ENCODE measurements at regions of chr19 and their contacts with region 1.

Region 1: DNA sequence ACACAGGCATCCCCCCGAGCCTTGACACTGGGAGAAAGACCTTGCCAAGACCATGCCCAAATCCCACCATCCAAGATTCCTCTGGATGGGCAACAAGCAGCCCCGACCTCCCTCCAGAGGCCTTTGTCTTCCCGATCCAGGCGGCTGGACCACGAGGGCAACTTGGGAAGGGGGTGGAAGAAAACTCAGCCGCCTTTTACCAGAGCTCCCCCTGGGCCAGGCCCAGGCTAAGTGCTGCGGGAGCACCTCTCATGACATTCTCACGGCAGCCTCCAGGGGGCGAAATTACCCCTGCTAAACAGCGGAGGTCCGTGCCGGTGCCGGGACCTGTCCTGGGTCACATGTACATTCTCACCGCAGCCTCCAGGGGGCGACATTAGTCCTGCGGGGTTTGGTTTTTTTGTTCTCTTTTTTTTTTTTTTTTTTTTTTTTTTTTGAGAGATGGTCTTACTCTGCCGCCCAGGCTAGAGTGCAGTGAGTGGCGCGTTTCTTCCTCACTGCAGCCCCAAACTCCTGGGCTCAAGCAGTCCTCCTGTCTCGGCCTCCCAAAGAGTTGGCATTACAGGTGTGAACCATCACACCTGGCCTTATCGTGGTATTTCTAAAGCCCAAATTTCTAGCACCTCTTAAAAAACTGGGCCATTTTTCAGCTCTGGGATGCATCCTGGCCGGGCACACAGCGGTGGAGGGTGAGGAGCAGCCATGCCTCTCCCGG is 2.1 kb upstream of the RSPH6A start:
- DNase-seq: peak; percentile 93 to 99 (median 95)
- ATAC-seq: peak; percentile 100
- H3K4me3 ChIP-seq: no peak overlapping the region
- H3K4me3 Mint-ChIP-seq: peak overlapping the region; percentile 18
- H3K27ac ChIP-seq: no peak overlapping the region
- H3K27ac Mint-ChIP-seq: no peak overlapping the region
- H3K4me1 ChIP-seq: peaks cover 16% of the 10 kb centered on the region
- H3K4me1 Mint-ChIP-seq: peaks cover 7% of the 10 kb centered on the region
- H3K27me3 ChIP-seq: peaks cover 0 to 5% of the 10 kb centered on the region in 2 experiments
- H3K27me3 Mint-ChIP-seq: peaks cover 8% of the 10 kb centered on the region
- CTCF ChIP-seq: peak; percentile 99

Region 2: GRCh38 chr19:45584332-45585157 is 232.6 kb before region 1 on chr19 and contains the start of gene OPA3:
- CTCF ChIA-PET with region 1: no interaction called
- POLR2A ChIA-PET with region 1: no interaction called
- intact Hi-C with region 1: no loop called
- DNase-seq: peak; percentile 97 to 100 (median 99)
- ATAC-seq: peak; percentile 86
- H3K4me3 ChIP-seq: peak within 1 kb of the TSS; percentile 80 to 86
- H3K4me3 Mint-ChIP-seq: peak within 1 kb of the TSS; percentile 96
- H3K27ac ChIP-seq: peak within 1 kb of the TSS; percentile 95 to 99
- H3K27ac Mint-ChIP-seq: peak within 1 kb of the TSS; percentile 99
- H3K4me1 ChIP-seq: peaks cover 6% of the 10 kb centered on the region
- H3K4me1 Mint-ChIP-seq: peaks cover 19% of the 10 kb centered on the region
- H3K27me3 ChIP-seq: no peaks in the 10 kb centered on the region
- H3K27me3 Mint-ChIP-seq: peaks cover 7% of the 10 kb centered on the region
- CTCF ChIP-seq: no peak
- total RNA-seq, gene OPA3: 5.6 to 5.7 TPM

Region 3: GRCh38 chr19:45632468-45633196 is 184.5 kb before region 1 on chr19:
- CTCF ChIA-PET with region 1: no interaction called
- POLR2A ChIA-PET with region 1: no interaction called
- intact Hi-C with region 1: no loop called
- DNase-seq: peak in 4 of 9 experiments; percentile 24 to 54 (median 41)
- ATAC-seq: no peak
- H3K4me3 ChIP-seq: no peak overlapping the region
- H3K4me3 Mint-ChIP-seq: no peak overlapping the region
- H3K27ac ChIP-seq: no peak overlapping the region
- H3K27ac Mint-ChIP-seq: no peak overlapping the region
- H3K4me1 ChIP-seq: no peaks in the 10 kb centered on the region
- H3K4me1 Mint-ChIP-seq: peaks cover 2% of the 10 kb centered on the region
- H3K27me3 ChIP-seq: no peaks in the 10 kb centered on the region
- H3K27me3 Mint-ChIP-seq: no peaks in the 10 kb centered on the region
- CTCF ChIP-seq: no peak

Region 4: DNA sequence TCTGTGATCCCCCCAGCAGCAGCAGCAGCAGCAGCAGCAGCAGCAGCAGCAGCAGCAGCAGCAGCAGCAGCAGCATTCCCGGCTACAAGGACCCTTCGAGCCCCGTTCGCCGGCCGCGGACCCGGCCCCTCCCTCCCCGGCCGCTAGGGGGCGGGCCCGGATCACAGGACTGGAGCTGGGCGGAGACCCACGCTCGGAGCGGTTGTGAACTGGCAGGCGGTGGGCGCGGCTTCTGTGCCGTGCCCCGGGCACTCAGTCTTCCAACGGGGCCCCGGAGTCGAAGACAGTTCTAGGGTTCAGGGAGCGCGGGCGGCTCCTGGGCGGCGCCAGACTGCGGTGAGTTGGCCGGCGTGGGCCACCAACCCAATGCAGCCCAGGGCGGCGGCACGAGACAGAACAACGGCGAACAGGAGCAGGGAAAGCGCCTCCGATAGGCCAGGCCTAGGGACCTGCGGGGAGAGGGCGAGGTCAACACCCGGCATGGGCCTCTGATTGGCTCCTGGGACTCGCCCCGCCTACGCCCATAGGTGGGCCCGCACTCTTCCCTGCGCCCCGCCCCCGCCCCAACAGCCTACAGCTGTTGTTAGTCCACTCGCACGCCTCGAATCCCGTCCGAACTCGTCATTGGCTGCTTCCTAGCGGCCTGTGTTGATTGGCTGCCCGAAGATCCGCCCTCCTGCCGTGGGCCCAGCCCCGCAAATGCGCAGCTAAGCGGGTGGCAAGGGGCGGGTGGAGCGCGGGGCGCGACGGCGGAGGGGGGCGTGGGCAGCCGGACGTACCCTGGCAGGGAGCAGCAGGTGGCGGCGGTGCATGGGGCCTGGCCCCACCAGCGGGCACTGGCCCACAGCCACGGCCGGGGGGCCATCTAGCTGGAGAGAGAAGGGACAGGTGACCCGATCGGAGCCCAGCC is 46.7 kb before region 1 on chr19:
- CTCF ChIA-PET with region 1: interaction called, 18 read pairs
- POLR2A ChIA-PET with region 1: interaction called, 3 read pairs
- intact Hi-C with region 1: loop called in 1 of 2 experiments (anchors 1 kb)
- DNase-seq: peak; percentile 79 to 94 (median 92)
- ATAC-seq: peak; percentile 74
- H3K4me3 ChIP-seq: peak overlapping the region; percentile 90 to 99
- H3K4me3 Mint-ChIP-seq: peak overlapping the region; percentile 84
- H3K27ac ChIP-seq: peak overlapping the region in 1 of 2 experiments; percentile 77
- H3K27ac Mint-ChIP-seq: peak overlapping the region; percentile 85
- H3K4me1 ChIP-seq: peaks cover 22% of the 10 kb centered on the region
- H3K4me1 Mint-ChIP-seq: peaks cover 24% of the 10 kb centered on the region
- H3K27me3 ChIP-seq: peaks cover 0 to 6% of the 10 kb centered on the region in 2 experiments
- H3K27me3 Mint-ChIP-seq: peaks cover 7% of the 10 kb centered on the region
- CTCF ChIP-seq: peak; percentile 99

Region 5: DNA sequence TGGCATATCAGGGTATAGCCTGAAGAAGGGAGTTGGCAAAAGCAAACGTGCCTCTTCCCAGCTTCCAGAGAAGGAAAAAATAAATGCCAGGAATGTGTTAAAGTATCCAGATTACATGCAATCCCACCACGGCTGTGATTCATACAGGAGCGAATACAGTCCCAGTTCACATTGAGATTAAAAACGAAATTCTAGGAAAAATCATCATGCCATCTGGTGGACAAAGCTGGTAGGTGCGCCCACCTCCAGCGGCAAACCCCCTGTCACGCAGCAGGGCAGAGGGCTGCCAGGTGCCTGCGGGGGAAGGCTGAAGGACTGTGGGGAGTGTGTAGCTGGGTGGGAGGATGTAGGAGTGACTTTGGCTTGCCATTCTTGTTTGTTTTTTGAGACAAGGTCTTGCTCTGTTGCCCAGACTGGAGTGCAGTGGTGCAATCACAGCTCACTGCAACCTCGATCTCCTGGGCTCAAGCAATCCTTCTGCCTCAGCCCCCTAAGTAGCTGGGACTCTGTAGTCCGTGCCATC is 18.1 kb before region 1 on chr19:
- CTCF ChIA-PET with region 1: interaction called, 15 read pairs
- POLR2A ChIA-PET with region 1: no interaction called
- intact Hi-C with region 1: no loop called
- DNase-seq: peak; percentile 28 to 80 (median 66)
- ATAC-seq: peak; percentile 97
- H3K4me3 ChIP-seq: no peak overlapping the region
- H3K4me3 Mint-ChIP-seq: no peak overlapping the region
- H3K27ac ChIP-seq: no peak overlapping the region
- H3K27ac Mint-ChIP-seq: no peak overlapping the region
- H3K4me1 ChIP-seq: peaks cover 5% of the 10 kb centered on the region
- H3K4me1 Mint-ChIP-seq: peaks cover 7% of the 10 kb centered on the region
- H3K27me3 ChIP-seq: peaks cover 3 to 12% of the 10 kb centered on the region in 2 experiments
- H3K27me3 Mint-ChIP-seq: peaks cover 26% of the 10 kb centered on the region
- CTCF ChIP-seq: peak; percentile 92

Region 6: DNA sequence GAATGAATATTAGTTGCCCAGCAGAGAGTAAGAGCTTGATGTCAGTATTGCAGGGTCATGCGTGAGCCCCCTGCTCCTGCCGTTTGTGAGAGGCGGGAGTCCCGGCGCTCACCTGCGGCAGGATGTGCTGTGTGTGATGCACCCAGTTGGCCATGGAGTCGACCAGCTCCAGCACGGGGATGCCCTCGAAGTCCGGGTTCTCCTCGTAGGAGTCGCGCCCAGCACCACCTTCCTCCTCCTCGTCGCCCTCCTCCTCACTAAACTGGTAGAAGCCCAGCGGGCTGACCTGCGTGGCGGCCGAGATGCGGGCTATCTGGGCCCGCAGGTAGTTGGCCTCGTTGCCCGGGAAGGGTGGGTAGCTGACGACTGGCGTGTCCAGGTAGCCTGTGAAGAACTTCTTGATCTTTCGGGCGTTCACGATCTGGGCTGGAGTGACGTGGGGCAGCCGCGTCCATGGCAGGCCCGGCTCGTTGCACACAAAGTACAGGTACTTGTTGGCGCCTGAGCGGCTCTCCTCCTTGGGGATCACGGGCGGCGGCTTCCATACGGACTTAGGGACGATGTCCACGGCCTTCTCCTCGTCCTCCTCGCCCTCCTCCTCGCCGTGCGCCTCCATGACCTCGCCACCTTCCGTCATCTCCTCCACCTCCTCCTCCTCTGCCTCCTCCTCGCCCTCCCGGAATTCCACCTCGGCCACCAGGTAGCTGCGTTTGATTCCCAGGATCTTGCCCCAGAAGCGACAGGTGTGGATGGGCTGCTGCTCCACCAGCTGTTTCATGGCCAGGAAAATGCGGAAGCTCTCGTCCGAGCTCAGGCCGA is 12.8 kb before region 1 on chr19:
- CTCF ChIA-PET with region 1: interaction called, 15 read pairs
- POLR2A ChIA-PET with region 1: no interaction called
- intact Hi-C with region 1: no loop called
- DNase-seq: no peak
- ATAC-seq: no peak
- H3K4me3 ChIP-seq: no peak overlapping the region
- H3K4me3 Mint-ChIP-seq: no peak overlapping the region
- H3K27ac ChIP-seq: no peak overlapping the region
- H3K27ac Mint-ChIP-seq: no peak overlapping the region
- H3K4me1 ChIP-seq: no peaks in the 10 kb centered on the region
- H3K4me1 Mint-ChIP-seq: no peaks in the 10 kb centered on the region
- H3K27me3 ChIP-seq: peaks cover 0 to under 1% of the 10 kb centered on the region in 2 experiments
- H3K27me3 Mint-ChIP-seq: peaks cover 9% of the 10 kb centered on the region
- CTCF ChIP-seq: no peak

Region 7: GRCh38 chr19:45828945-45829344 is 11.8 kb after region 1 on chr19:
- CTCF ChIA-PET with region 1: interaction called, 12 read pairs
- POLR2A ChIA-PET with region 1: interaction called, 3 read pairs
- intact Hi-C with region 1: no loop called
- DNase-seq: no peak
- ATAC-seq: no peak
- H3K4me3 ChIP-seq: no peak overlapping the region
- H3K4me3 Mint-ChIP-seq: no peak overlapping the region
- H3K27ac ChIP-seq: no peak overlapping the region
- H3K27ac Mint-ChIP-seq: no peak overlapping the region
- H3K4me1 ChIP-seq: no peaks in the 10 kb centered on the region
- H3K4me1 Mint-ChIP-seq: peaks cover 3% of the 10 kb centered on the region
- H3K27me3 ChIP-seq: no peaks in the 10 kb centered on the region
- H3K27me3 Mint-ChIP-seq: no peaks in the 10 kb centered on the region
- CTCF ChIP-seq: no peak

Region 8: DNA sequence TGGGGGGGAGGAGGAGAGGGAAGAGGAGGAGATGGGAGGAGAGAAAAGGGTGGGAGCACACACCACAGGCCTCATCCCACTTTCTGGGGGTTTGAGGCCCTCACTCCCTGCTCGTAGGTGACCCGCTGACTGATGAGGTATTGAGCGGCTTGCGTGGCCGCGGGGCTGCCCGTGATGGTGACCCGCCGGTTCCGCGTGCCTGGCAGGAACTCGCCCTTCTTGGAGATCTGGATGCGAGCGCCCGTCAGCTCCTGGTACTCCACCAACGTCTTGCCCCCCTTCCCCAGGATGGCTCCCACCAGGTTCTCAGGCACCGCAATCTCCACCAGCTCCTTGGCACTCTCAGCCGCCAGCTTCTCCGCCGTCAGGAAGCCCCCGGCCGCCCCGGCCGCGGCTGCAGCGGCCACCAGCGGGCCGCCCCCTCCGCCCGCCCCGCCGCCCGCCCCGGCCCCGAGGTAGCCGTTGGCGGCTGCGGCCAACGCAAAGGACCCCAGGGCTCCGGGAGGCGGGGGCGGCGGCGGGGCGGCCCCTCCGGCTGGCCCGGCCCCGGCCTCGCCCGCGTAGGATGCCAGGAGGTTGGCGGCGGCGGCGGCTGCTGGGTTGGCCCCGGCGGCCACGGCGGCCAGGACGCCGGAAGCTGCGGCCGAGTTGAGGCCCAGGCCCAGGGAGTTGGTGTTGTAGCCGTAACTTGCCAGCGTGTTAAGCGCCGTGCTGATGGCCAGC is 122.8 kb after region 1 on chr19:
- CTCF ChIA-PET with region 1: no interaction called
- POLR2A ChIA-PET with region 1: no interaction called
- intact Hi-C with region 1: no loop called
- DNase-seq: no peak
- ATAC-seq: no peak
- H3K4me3 ChIP-seq: no peak overlapping the region
- H3K4me3 Mint-ChIP-seq: no peak overlapping the region
- H3K27ac ChIP-seq: no peak overlapping the region
- H3K27ac Mint-ChIP-seq: no peak overlapping the region
- H3K4me1 ChIP-seq: no peaks in the 10 kb centered on the region
- H3K4me1 Mint-ChIP-seq: no peaks in the 10 kb centered on the region
- H3K27me3 ChIP-seq: peaks cover 6 to 8% of the 10 kb centered on the region in 2 experiments
- H3K27me3 Mint-ChIP-seq: peaks cover 42% of the 10 kb centered on the region
- CTCF ChIP-seq: no peak

Region 9: GRCh38 chr19:45994989-45995714 is 178.0 kb after region 1 on chr19 and contains the start of gene CCDC61:
- CTCF ChIA-PET with region 1: interaction called, 3 read pairs
- POLR2A ChIA-PET with region 1: no interaction called
- intact Hi-C with region 1: loop called in 1 of 2 experiments (anchors 5 kb)
- DNase-seq: peak; percentile 92 to 99 (median 95)
- ATAC-seq: peak; percentile 95
- H3K4me3 ChIP-seq: peak within 1 kb of the TSS; percentile 73 to 77
- H3K4me3 Mint-ChIP-seq: no peak within 1 kb of the TSS
- H3K27ac ChIP-seq: peak within 1 kb of the TSS; percentile 64 to 74
- H3K27ac Mint-ChIP-seq: no peak within 1 kb of the TSS
- H3K4me1 ChIP-seq: peaks cover 16% of the 10 kb centered on the region
- H3K4me1 Mint-ChIP-seq: peaks cover 25% of the 10 kb centered on the region
- H3K27me3 ChIP-seq: no peaks in the 10 kb centered on the region
- H3K27me3 Mint-ChIP-seq: peaks cover 7% of the 10 kb centered on the region
- CTCF ChIP-seq: no peak
- total RNA-seq, gene CCDC61: 4.9 to 6.2 TPM

Region 10: GRCh38 chr19:46265217-46265828 is 448.2 kb after region 1 on chr19:
- CTCF ChIA-PET with region 1: no interaction called
- POLR2A ChIA-PET with region 1: no interaction called
- intact Hi-C with region 1: loop called in 1 of 2 experiments (anchors 5 kb)
- DNase-seq: peak; percentile 37 to 87 (median 67)
- ATAC-seq: peak; percentile 58
- H3K4me3 ChIP-seq: no peak overlapping the region
- H3K4me3 Mint-ChIP-seq: no peak overlapping the region
- H3K27ac ChIP-seq: no peak overlapping the region
- H3K27ac Mint-ChIP-seq: no peak overlapping the region
- H3K4me1 ChIP-seq: peaks cover 14% of the 10 kb centered on the region
- H3K4me1 Mint-ChIP-seq: peaks cover 17% of the 10 kb centered on the region
- H3K27me3 ChIP-seq: peaks cover 2 to 26% of the 10 kb centered on the region in 2 experiments
- H3K27me3 Mint-ChIP-seq: peaks cover 35% of the 10 kb centered on the region
- CTCF ChIP-seq: peak; percentile 90

Measured in CD8-positive, alpha-beta T cell (primary cell).